H1 (cell line): ENCODE measurements at regions of chr14 and their contacts with region 1.

Region 1: GRCh38 chr14:64880221-64881121 is 764 bp upstream of the SPTB start:
- DNase-seq: peak in 1 of 2 experiments; percentile 88
- H3K4me3 ChIP-seq: peak overlapping the region; percentile 56 to 82 (median 66)
- H3K27ac ChIP-seq: no peak overlapping the region
- H3K4me1 ChIP-seq: peaks cover 0 to 3% (median 1%) of the 10 kb centered on the region in 4 experiments; a peak in 5 of 7 replicates
- H3K27me3 ChIP-seq: peaks cover 0 to 34% (median 24%) of the 10 kb centered on the region in 4 experiments; a peak in 6 of 7 replicates
- CTCF ChIP-seq: no peak
- EP300 ChIP-seq: no peak
- POLR2A ChIP-seq: peak in 1 of 2 experiments; percentile 28; a peak in 1 of 3 replicates
- RAD21 ChIP-seq: no peak

Region 2: DNA sequence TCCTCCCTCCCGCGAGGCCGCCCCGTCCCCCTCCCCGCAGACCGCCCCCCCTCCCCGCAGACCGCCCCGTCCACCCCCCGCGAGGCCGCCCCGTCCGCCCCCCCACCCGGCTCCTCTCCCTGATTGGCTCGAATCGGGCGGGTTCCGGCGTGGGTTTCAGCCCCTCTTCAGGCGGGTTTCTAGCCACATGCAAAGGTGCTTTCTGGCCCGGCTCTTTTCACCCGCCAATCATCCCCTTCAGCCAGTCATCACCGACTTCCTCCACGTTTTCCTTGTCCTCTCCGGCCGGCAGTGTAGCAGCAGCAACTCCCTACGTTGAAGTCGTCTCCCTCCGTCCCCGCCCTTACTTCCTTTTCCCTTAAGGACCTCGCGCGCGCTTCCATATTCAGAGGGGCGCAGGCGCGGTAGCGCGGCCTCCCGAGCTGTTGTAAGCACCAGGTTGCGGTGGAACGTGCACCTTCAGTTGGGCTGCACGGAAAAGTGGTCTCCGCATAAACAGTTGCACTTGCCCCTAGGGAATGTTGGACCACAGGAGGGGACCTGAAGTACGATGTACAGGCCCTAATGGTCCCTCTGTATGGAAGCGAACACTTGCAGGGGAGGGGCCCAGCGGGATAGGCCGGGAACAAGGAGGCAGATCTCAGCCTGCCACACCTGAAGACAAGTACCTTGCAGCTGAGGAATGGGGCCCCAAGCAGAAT is 541.7 kb before region 1 on chr14:
- CTCF ChIA-PET with region 1: no interaction called
- POLR2A ChIA-PET with region 1: no interaction called
- DNase-seq: peak; percentile 92 to 96
- H3K4me3 ChIP-seq: peak overlapping the region; percentile 74 to 93 (median 81)
- H3K27ac ChIP-seq: peak overlapping the region; percentile 88
- H3K4me1 ChIP-seq: peaks cover 6 to 14% (median 9%) of the 10 kb centered on the region in 4 experiments; a peak in 6 of 7 replicates
- H3K27me3 ChIP-seq: no peaks in the 10 kb centered on the region
- CTCF ChIP-seq: no peak
- EP300 ChIP-seq: no peak
- POLR2A ChIP-seq: peak; percentile 44 to 85
- RAD21 ChIP-seq: no peak

Region 3: DNA sequence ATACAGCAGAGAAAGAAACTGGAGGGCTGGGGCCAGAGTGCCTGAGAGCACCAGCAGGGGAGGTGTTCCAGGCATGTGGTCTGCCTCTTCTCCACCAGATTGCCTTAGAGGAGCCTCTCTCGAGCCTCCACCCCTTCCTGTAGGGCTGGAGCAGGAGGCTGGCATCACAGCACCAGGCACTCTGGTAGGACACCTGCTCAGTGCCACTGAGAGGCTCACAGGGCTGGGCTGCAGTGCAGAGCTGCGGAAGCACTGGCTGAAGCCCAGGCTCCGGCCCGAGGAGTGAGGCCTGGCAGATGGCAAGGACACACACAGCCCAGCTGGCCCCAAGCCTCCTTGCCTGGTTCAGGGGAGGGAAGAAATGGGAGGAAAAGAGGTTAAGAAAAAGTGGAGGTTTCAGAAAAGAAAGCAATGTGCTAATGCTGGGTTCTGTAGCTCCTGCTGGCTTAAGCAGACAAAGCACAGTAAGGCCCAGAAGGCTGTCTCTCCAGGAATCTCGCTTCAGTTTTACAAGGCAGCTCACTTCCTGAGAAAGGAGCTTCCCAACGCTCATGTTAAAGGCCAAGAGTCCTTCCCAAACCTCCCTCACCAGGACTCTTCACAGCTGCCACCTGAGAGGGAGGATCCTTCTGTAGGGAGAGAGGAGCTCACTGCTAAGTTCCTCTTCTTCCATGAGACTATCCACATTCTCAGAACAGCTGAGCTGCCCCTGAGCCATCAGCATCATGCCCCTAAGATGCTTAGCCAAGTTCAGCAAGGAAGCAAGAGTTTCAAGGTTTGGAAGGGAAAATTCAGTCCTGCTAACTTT is 24.5 kb before region 1 on chr14:
- CTCF ChIA-PET with region 1: interaction called, 23 read pairs
- POLR2A ChIA-PET with region 1: no interaction called
- DNase-seq: no peak
- H3K4me3 ChIP-seq: no peak overlapping the region
- H3K27ac ChIP-seq: no peak overlapping the region
- H3K4me1 ChIP-seq: peaks cover 12 to 19% (median 14%) of the 10 kb centered on the region in 4 experiments
- H3K27me3 ChIP-seq: no peaks in the 10 kb centered on the region
- CTCF ChIP-seq: no peak
- EP300 ChIP-seq: no peak
- POLR2A ChIP-seq: no peak
- RAD21 ChIP-seq: no peak

Region 4: DNA sequence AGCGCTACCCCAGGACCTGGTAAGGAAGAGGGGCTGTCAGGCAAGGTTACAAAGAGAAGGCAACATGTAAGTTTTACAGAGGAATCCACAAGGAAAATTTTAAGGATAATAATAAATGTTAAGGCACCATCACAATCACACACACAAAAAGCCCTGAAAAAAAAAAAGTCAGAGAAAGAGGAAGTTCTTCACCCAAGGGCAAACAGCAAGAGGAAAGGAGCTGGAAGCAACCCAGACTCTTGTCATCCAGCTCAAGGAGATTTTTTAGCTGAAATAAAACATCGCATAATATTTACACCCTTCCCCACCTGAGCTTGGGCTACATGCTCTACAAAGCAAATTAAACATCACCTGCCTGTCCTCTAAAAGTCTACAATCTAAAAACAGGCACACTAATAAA is 10.3 kb before region 1 on chr14:
- CTCF ChIA-PET with region 1: interaction called, 41 read pairs
- POLR2A ChIA-PET with region 1: interaction called, 5 read pairs
- DNase-seq: no peak
- H3K4me3 ChIP-seq: no peak overlapping the region
- H3K27ac ChIP-seq: no peak overlapping the region
- H3K4me1 ChIP-seq: peaks cover 0 to 11% (median 3%) of the 10 kb centered on the region in 4 experiments; a peak in 3 of 7 replicates
- H3K27me3 ChIP-seq: no peaks in the 10 kb centered on the region; a peak in 2 of 7 replicates
- CTCF ChIP-seq: no peak
- EP300 ChIP-seq: no peak
- POLR2A ChIP-seq: no peak
- RAD21 ChIP-seq: no peak

Region 5: GRCh38 chr14:64914237-64914971 is 33.9 kb after region 1 on chr14 and contains the start of gene CHURC1:
- CTCF ChIA-PET with region 1: interaction called, 16 read pairs
- POLR2A ChIA-PET with region 1: interaction called, 3 read pairs
- DNase-seq: peak; percentile 89 to 96
- H3K4me3 ChIP-seq: peak within 1 kb of the TSS; percentile 75 to 90 (median 89)
- H3K27ac ChIP-seq: peak within 1 kb of the TSS; percentile 86
- H3K4me1 ChIP-seq: peaks cover 0 to 4% (median 3%) of the 10 kb centered on the region in 4 experiments; a peak in 4 of 7 replicates
- H3K27me3 ChIP-seq: no peaks in the 10 kb centered on the region
- CTCF ChIP-seq: peak in 1 of 3 experiments; percentile 9; a peak in 1 of 4 replicates
- EP300 ChIP-seq: no peak
- POLR2A ChIP-seq: peak in 1 of 2 experiments; percentile 97; a peak in 2 of 3 replicates
- RAD21 ChIP-seq: 0 out of 4 replicates have a peak, but pooled peaks of 1 of the 2 experiments have one; percentile 4
- total RNA-seq, gene CHURC1: 50.2 and 55.6 TPM in 2 replicates